Right ventricle myocardium inferior (tissue), 1 donor: ENCODE measurements at regions of chr10 and their contacts with region 1.

Region 1: DNA sequence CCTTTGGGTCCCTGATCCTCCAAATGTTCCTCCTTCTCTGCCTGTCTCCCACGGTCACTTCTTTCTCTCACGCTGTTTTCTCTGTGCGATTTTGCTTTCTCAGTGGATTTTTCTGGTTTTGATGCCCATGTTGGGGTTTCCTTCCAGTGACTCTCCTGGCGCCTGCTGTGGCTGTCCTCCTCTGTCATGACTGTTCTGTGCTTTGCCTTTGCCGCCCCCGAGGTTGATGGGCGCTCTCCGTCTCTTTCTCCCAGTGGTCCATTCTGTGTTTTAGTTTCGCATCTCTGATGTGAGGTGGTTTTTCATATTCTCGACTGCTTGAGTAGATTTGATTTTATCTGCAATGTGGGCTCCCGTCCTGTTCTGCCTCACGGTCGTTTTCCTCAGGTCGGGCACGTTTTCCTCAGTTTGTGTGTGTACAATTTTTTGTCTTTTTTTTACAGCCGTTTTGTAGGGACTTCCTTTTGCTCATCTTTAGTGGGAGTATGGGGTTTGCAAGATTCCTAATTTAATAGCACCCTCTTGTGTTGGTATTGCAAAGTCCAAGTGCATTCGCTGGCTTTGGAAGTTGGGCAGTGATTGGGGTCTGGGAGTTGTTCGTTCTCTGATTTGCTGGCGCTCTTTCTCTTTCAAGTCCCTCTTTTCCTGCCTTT is 100.0 kb downstream of the INPP5A start:
- DNase-seq: no peak
- ATAC-seq: peak; percentile 73

Region 2: DNA sequence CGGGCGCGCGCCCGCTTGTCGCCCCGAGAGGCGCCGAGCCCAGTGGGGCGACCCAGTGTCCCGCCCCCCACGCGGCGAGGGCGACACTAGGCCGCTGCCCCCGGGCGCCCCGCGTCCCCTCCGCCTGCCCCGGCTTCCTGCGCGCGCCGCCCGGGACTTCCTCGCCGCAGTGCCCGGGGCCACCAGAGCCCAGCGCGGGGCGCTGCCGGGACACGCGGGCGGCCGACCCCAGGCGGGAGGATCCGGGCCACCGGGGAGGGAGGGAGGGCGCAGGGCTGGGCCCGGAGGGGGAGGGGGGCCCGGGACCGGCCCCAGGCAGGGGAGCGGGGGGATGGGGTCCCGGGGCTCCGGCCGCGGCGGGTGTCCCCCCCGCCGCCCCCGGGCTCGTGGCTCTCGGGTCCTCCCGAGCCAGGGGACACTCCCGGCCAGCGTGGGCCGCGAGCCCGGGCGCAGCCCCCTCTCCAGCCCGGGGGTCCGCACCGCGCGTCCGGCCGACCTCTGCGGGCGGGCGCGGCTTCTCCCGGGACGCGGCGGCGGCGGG is 241.0 kb before region 1 on chr10:
- intact Hi-C with region 1: loop called (anchors 5 kb)
- DNase-seq: peak; percentile 86
- ATAC-seq: peak; percentile 53

Region 3: GRCh38 chr10:132458593-132459300 is 178.9 kb before region 1 on chr10:
- intact Hi-C with region 1: loop called (anchors 1 kb)
- DNase-seq: peak; percentile 90
- ATAC-seq: peak; percentile 60

Region 4: DNA sequence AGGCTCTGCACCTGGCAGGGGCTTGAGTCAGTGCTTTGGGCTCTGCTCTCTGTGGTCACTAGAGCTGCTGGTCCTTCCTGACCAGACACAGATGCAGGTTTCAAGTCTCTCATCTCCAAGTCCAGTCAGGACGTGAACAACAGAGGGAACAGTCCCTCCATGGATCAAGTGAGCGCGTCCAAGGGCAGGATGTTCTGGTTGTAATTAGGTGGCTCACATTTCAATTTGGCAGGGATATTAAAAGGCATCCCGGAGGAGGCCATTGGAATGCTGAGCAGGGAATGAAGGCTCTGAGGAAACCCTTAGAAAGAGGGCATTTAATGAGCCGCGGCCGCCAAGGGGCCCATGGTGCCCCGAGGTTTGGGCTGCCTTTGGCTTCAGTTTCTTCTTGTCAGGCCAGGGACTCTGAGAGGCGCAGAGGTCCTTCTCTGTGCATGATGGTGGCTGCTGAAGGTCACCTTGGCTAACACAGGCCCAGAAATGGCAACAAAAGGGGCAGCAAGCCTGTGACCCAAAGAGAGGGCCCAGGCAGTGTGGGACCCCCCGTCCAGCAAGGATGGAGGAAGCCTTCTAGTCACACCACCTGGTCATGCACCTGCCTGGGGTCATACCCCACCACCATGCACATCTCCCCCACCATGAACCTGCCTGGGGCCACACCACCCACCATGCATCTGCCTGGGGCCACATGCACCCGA is 130.7 kb before region 1 on chr10:
- intact Hi-C with region 1: loop called (anchors 2 kb)
- DNase-seq: peak; percentile 46
- ATAC-seq: peak; percentile 54

Region 5: GRCh38 chr10:132722394-132723329 is 85.1 kb after region 1 on chr10:
- intact Hi-C with region 1: no loop called
- DNase-seq: no peak
- ATAC-seq: no peak